Activated naive CD4-positive, alpha-beta T cell treated with anti-CD3 and anti-CD28 coated beads for 36 hours (primary cell): ENCODE measurements at regions of chr18 and their contacts with region 1.

Region 1: DNA sequence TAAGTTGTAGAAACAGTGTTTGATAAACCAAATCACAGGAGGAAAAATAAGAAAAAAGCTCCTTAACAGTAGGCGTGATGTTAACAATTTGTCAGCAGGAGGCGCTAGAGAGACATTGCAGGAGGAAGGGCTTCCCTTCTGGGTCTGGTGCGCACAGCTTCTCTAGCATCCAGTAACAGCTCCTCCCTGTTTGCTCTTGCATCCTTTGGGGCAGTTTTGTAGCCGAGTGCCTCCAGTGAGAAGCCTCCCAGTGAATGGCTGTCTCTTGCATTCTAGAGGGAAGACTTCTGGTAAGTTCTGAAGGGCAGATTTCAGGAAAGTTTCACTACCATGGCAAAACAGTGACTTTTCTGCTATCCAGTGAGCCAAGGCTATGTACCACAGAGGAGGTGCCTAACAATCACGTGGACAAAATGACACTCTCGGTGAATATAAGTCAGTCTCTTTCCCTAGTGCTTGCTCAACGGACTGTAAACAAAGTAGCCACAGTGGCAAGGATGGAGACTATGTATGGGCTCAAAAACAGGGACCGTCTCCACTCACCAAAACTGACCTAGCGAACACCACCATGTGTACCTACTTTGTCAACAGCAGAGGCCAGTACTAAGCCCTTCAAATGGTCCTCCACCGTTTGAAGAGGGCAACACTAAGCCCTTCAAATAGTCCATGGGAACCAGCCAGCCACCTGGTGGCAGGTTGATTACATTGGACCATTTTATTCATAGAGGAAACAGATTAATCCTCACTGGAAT is 9.6 kb upstream of the ZNF396 start:
- DNase-seq: peak; percentile 81
- H3K4me3 Mint-ChIP-seq: no peak overlapping the region
- H3K27ac Mint-ChIP-seq: no peak overlapping the region
- H3K4me1 Mint-ChIP-seq: peaks cover 2% of the 10 kb centered on the region
- H3K27me3 Mint-ChIP-seq: peaks cover 23% of the 10 kb centered on the region

Region 2: GRCh38 chr18:35231052-35231451 is 155.7 kb before region 1 on chr18:
- CTCF ChIA-PET with region 1: interaction called, 13 read pairs
- intact Hi-C with region 1: loop called (anchors 1 kb)
- DNase-seq: peak; percentile 88
- H3K4me3 Mint-ChIP-seq: peak overlapping the region; percentile 56
- H3K27ac Mint-ChIP-seq: no peak overlapping the region
- H3K4me1 Mint-ChIP-seq: peaks cover 3% of the 10 kb centered on the region
- H3K27me3 Mint-ChIP-seq: peaks cover 3% of the 10 kb centered on the region

Region 3: GRCh38 chr18:35371412-35372195 is 15.2 kb before region 1 on chr18:
- CTCF ChIA-PET with region 1: interaction called, 11 read pairs
- intact Hi-C with region 1: no loop called
- DNase-seq: no peak
- H3K4me3 Mint-ChIP-seq: no peak overlapping the region
- H3K27ac Mint-ChIP-seq: no peak overlapping the region
- H3K4me1 Mint-ChIP-seq: peaks cover 8% of the 10 kb centered on the region
- H3K27me3 Mint-ChIP-seq: no peaks in the 10 kb centered on the region

Region 4: DNA sequence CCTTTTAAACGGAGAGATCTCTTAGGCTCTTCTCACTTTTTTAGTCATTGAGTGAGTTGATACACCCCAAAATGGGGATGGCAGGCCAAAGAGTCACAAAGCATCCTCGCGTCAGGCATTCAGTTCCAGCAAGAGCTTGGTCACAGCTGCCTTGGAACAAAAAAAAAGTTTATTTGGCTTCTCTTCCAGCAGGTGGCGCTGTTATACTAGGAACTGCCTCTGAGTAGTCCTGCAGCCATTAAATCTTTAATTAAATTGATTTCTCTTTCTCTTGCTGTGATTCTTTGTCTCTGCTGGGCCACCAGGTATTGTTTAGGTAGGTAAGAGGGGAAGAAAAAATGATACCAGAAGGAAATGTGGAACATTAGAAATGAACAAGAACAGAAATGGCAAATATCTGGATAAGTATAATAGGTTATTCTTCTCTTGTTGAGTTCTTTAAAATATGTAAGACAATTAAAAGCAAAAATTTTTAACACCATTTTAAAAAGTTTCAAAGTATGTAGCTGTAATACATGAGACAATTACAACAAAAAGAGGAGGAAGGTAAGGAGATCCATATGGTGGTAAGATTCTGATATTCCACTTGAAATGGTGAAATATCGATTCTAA is 369.8 kb after region 1 on chr18:
- CTCF ChIA-PET with region 1: interaction called, 4 read pairs
- intact Hi-C with region 1: loop called (anchors 2 kb)
- DNase-seq: peak; percentile 78
- H3K4me3 Mint-ChIP-seq: no peak overlapping the region
- H3K27ac Mint-ChIP-seq: no peak overlapping the region
- H3K4me1 Mint-ChIP-seq: no peaks in the 10 kb centered on the region
- H3K27me3 Mint-ChIP-seq: peaks cover 18% of the 10 kb centered on the region